Heart left ventricle (tissue), 16 donors: ENCODE measurements at regions of chr17 and their contacts with region 1.

Region 1: GRCh38 chr17:42010898-42011516 is 6.2 kb downstream of the DNAJC7 start:
- DNase-seq: no peak
- ATAC-seq: no peak
- H3K4me3 ChIP-seq: no peak overlapping the region
- H3K27ac ChIP-seq: peak overlapping the region in 3 of 12 donors; percentile 3 to 77 (median 18)
- H3K4me1 ChIP-seq: peaks cover 3 to 93% (median 64%) of the 10 kb centered on the region in 12 donors
- H3K27me3 ChIP-seq: no peaks in the 10 kb centered on the region
- CTCF ChIP-seq: no peak
- POLR2A ChIP-seq: no peak

Region 2: GRCh38 chr17:41930009-41930832 is 80.8 kb before region 1 on chr17 and contains the start of gene ODAD4:
- intact Hi-C with region 1: loop called in 1 of 10 experiments (anchors 2 kb)
- DNase-seq: peak; percentile 96 to 99 (median 97)
- ATAC-seq: peak; percentile 94 to 99 (median 98)
- H3K4me3 ChIP-seq: peak within 1 kb of the TSS; percentile 34 to 73 (median 61)
- H3K27ac ChIP-seq: peak within 1 kb of the TSS; percentile 65 to 95 (median 82)
- H3K4me1 ChIP-seq: peaks cover 0 to 35% (median 9%) of the 10 kb centered on the region in 12 donors
- H3K27me3 ChIP-seq: no peaks in the 10 kb centered on the region
- CTCF ChIP-seq: peak in 11 of 12 donors; percentile 22 to 61 (median 44)
- POLR2A ChIP-seq: peak in 1 of 2 donors; percentile 85
- total RNA-seq, gene ODAD4: 0.38 to 0.96 (median 0.73) TPM in 8 of 9 donors, not detected in the other

Region 3: DNA sequence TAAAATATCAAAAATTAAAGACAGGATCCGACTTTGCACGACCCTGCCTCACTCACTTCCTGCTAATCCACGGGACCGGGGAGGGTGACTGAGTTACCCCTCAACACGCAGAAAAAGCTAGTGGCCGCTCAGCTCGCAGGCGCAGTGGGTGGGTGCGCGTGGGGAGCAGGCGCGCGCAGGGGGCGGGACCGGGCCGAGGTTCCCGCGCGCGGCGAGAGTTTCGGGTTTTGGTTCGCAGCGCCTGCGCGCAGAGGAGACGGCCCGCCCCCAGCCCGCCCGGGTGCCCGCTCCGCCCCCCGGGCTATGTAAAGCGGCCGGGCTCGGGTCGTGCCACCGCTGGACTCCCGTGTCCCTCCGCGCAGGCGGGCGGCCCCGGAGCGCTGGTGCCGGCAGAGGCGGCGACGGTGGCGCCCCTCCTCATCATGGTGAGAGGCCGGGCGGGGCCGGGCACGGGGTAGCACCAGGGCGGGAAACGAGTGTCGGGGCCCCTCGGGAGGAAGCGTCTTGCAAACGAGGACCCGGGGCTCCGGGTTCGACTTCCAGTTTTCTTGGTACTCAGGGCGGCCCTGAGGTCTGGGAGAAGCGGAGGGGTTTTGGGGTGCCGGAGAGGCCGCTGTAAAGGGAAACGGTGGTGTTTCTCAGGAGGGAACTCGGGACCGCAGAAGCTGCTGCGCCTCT is 44.4 kb before region 1 on chr17 and contains the start of gene CNP:
- intact Hi-C with region 1: loop called in 8 of 10 experiments (anchors 2 to 5 kb)
- DNase-seq: peak; percentile 93 to 96 (median 94)
- ATAC-seq: peak; percentile 90 to 95 (median 94)
- H3K4me3 ChIP-seq: peak within 1 kb of the TSS; percentile 64 to 100 (median 90)
- H3K27ac ChIP-seq: peak within 1 kb of the TSS; percentile 59 to 94 (median 86)
- H3K4me1 ChIP-seq: peaks cover 0 to 42% (median 24%) of the 10 kb centered on the region in 12 donors
- H3K27me3 ChIP-seq: no peaks in the 10 kb centered on the region
- CTCF ChIP-seq: no peak
- POLR2A ChIP-seq: peak in 1 of 2 donors; percentile 91
- total RNA-seq, gene CNP: 23.3 to 49.1 (median 27.5) TPM

Region 4: DNA sequence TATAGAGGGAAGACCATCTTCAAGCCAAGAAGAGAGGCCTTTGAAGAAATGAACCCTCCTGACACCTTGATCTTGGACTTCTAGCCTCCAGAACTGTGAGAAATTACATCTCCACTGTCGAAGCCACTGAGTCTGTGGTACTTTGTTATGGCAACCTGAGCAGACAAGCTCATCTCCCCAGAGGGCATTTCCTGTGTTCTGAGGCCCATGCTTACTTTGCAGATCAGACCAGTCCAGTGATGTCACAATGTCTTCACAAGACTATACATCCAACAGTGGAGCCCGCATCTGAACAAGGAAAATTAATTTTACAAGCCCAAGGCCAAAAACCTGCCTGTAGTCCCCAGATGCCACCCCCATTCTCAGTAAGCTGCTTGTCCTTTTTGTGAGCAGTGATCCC is 54.2 kb after region 1 on chr17:
- intact Hi-C with region 1: no loop called
- DNase-seq: no peak
- ATAC-seq: no peak
- H3K4me3 ChIP-seq: no peak overlapping the region
- H3K27ac ChIP-seq: no peak overlapping the region
- H3K4me1 ChIP-seq: peaks cover 0 to 10% (median 2%) of the 10 kb centered on the region in 12 donors
- H3K27me3 ChIP-seq: no peaks in the 10 kb centered on the region
- CTCF ChIP-seq: no peak
- POLR2A ChIP-seq: no peak